ENCODE measurements at regions of chr12 and their contacts with region 1.

Region 1: GRCh38 chr12:14239350-14239934 is 126.0 kb upstream of the ATF7IP start:
- DNase-seq: peak; percentile 62
- H3K4me3 Mint-ChIP-seq: peak overlapping the region; percentile 69
- H3K27ac Mint-ChIP-seq: peak overlapping the region; percentile 74
- H3K4me1 Mint-ChIP-seq: peaks cover 24% of the 10 kb centered on the region
- H3K27me3 Mint-ChIP-seq: no peaks in the 10 kb centered on the region

Region 2: GRCh38 chr12:14216405-14217294 is 22.8 kb before region 1 on chr12:
- CTCF ChIA-PET with region 1: interaction called, 26 read pairs
- POLR2A ChIA-PET with region 1: no interaction called
- intact Hi-C with region 1: no loop called
- DNase-seq: no peak
- H3K4me3 Mint-ChIP-seq: peak overlapping the region; percentile 44
- H3K27ac Mint-ChIP-seq: peak overlapping the region; percentile 42
- H3K4me1 Mint-ChIP-seq: peaks cover 35% of the 10 kb centered on the region
- H3K27me3 Mint-ChIP-seq: no peaks in the 10 kb centered on the region

Region 3: DNA sequence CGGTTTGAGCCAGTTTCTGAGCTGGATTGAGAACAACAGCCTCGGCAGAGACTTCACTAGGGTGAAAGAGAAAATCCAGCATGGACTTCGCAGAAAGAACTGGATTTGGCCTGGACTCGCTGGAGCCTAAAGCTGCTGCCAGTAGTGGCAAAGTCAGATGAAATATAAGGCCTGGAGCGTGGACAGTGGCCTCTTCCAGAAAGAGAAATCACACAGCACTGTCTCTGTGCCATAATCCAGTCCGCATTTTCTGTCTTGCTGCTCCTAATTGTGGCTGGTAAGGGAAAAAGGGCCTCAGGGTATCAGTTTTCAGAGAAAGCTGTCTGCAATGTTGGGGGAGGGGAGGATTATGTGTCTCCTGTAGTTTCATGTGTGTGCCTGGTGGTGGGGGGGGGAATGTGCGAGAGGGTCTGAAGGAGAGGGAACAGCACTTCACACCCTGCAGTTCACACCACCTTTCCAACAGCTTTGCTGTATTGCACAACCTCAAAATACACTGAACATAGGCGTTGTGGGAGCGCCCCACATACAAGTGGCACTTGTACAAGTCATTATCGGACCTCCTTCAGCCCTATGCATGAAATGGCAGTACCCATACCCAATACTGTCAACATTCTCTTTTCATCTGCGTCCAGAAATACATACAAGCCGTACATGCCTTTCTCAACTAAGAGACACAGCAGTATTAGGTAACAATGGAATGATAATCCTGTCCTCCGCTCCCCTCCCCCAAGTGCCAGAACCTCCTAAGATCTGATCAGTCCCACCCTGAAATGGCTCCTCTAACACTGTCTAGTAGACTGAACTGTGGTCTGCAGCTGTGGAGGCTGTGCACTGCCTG is 18.5 kb after region 1 on chr12:
- CTCF ChIA-PET with region 1: interaction called, 19 read pairs
- POLR2A ChIA-PET with region 1: no interaction called
- intact Hi-C with region 1: loop called (anchors 1 kb)
- DNase-seq: peak; percentile 97
- H3K4me3 Mint-ChIP-seq: peak overlapping the region; percentile 67
- H3K27ac Mint-ChIP-seq: peak overlapping the region; percentile 99
- H3K4me1 Mint-ChIP-seq: peaks cover 45% of the 10 kb centered on the region
- H3K27me3 Mint-ChIP-seq: no peaks in the 10 kb centered on the region

Region 4: DNA sequence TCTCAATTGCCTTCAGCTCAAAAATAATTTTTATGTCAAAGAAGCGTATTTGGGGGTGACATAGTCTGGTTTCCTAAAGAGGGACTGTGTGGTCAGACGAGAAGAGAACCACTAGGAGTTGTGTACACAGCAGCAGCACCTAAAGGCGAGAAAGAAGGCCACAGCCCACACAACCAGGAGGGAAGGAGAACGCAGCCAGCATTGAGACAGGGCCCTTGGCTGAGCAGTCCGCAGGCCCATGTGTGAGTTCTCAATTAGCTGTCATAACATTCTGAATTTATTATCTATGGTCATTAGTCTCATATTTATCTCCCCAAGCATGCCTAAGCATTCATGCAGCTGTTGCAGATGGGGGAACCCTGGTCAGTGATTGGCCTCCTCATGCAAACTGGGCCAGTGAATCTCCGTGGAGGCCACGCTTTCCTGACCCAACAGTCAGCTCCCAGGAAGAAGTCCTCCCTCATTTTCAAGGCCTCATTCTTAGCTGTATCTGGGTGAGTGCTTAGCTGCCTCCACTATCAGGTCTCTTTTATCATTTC is 44.8 kb after region 1 on chr12:
- CTCF ChIA-PET with region 1: no interaction called
- POLR2A ChIA-PET with region 1: no interaction called
- intact Hi-C with region 1: no loop called
- DNase-seq: no peak
- H3K4me3 Mint-ChIP-seq: no peak overlapping the region
- H3K27ac Mint-ChIP-seq: no peak overlapping the region
- H3K4me1 Mint-ChIP-seq: peaks cover 5% of the 10 kb centered on the region
- H3K27me3 Mint-ChIP-seq: no peaks in the 10 kb centered on the region

Region 5: GRCh38 chr12:14454098-14454907 is 214.9 kb after region 1 on chr12:
- CTCF ChIA-PET with region 1: interaction called, 58 read pairs
- POLR2A ChIA-PET with region 1: no interaction called
- intact Hi-C with region 1: loop called (anchors 1 kb)
- DNase-seq: peak; percentile 31
- H3K4me3 Mint-ChIP-seq: peak overlapping the region; percentile 20
- H3K27ac Mint-ChIP-seq: peak overlapping the region; percentile 77
- H3K4me1 Mint-ChIP-seq: peaks cover 56% of the 10 kb centered on the region
- H3K27me3 Mint-ChIP-seq: no peaks in the 10 kb centered on the region

Region 6: GRCh38 chr12:14629832-14630710 is 390.6 kb after region 1 on chr12:
- CTCF ChIA-PET with region 1: interaction called, 8 read pairs
- POLR2A ChIA-PET with region 1: no interaction called
- intact Hi-C with region 1: loop called (anchors 2 kb)
- DNase-seq: peak; percentile 71
- H3K4me3 Mint-ChIP-seq: no peak overlapping the region
- H3K27ac Mint-ChIP-seq: no peak overlapping the region
- H3K4me1 Mint-ChIP-seq: no peaks in the 10 kb centered on the region
- H3K27me3 Mint-ChIP-seq: no peaks in the 10 kb centered on the region

Region 7: DNA sequence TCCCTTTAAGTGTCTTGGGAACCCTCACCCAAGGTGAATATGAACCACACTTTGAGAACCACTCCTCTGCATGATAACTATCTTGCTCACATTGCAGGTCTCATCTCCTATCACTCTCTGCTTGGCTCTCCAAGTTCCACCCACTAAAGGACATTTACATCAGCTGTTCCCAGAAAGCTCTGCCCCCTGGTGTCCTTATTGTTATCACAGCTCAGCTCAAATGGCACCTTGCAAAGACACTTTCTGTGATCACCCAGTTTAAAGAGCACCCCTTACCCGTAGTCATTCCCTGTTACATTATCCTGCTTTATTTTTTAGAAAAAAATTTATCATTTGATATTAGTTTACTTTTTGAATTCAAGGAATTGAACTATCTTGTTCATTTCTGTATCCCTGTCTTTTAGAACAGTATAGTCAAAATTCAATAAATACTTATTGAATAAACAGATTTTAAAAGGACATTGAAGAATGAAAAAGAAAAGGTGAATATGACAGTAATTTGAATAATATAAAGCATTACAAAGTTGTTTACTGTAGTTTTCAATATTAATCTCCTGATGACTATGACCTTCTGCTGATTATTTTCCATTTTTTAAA is 477.5 kb after region 1 on chr12:
- CTCF ChIA-PET with region 1: interaction called, 12 read pairs
- POLR2A ChIA-PET with region 1: no interaction called
- intact Hi-C with region 1: loop called (anchors 1 kb)
- DNase-seq: peak; percentile 58
- H3K4me3 Mint-ChIP-seq: no peak overlapping the region
- H3K27ac Mint-ChIP-seq: no peak overlapping the region
- H3K4me1 Mint-ChIP-seq: peaks cover 2% of the 10 kb centered on the region
- H3K27me3 Mint-ChIP-seq: peaks cover 3% of the 10 kb centered on the region